ENCODE measurements at regions of chr7 and their contacts with region 1.

Region 1: DNA sequence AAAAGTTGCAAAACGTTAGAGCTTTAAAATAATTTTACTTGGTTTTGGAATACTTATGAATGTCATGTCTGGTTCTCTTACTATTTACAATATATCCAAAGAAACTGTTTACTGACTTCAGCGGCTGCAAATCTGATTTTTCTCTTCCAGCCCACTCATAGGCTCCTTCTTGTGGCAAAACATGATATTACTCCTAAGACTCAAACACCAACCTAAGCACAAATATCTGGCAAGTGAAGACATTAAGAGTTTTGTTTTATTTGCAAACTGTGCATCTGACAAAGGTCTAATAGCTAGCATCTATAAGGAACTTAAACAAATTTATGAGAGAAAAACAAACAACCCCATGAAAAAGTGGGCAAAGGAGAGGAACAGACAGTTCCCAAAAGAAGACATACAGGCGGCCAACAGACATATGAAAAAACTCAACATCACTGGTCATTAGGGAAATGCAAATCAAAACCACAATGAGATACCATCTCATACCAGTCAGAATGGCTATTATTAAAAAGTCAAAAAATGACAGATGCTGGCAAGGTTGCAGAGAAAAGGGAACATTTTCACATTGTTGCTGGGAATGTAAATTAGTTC is 20.3 kb upstream of the GJC3 start:
- DNase-seq: no peak
- ATAC-seq: no peak
- H3K4me3 Mint-ChIP-seq: no peak overlapping the region
- H3K27ac Mint-ChIP-seq: no peak overlapping the region
- H3K4me1 Mint-ChIP-seq: peaks cover 2% of the 10 kb centered on the region
- H3K27me3 Mint-ChIP-seq: peaks cover 24% of the 10 kb centered on the region
- CTCF ChIP-seq: no peak

Region 2: DNA sequence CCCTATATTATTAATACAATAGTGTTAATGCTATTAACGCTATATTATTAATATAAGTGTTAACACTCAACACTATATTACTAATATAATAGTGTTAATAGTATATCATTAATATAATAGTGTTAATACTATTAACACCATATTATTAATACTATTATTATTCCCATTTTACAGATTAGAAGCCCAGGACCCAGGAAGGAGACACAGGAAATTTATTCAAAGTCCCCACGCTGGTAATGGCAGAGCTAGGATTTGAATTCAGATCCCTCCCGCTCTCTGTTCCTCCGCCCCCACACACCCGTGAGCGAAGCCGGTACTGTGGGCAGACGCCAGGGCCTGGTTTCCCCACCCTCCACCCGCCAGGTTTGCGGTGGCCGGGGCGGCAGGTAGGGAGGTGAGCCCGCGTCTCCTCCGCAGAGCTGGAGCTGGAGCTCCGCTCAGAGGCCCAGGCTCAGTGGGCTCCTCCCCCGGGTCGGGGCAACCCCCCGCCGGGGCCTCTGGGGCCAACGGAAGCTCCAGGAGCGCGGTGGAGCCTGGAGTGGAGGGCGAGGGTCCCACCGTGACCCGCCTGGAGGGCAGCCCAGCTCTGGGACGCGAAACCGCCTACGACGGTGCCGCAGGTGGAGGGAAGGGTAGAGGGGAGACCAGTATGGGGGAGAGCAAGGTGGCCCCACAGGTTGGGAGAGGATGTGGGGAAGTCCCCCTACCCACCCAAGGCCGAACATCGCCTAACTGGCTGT is 351.8 kb before region 1 on chr7 and contains the start of gene TMEM225B:
- CTCF ChIA-PET with region 1: no interaction called
- POLR2A ChIA-PET with region 1: no interaction called
- intact Hi-C with region 1: no loop called
- DNase-seq: no peak
- ATAC-seq: no peak
- H3K4me3 Mint-ChIP-seq: no peak within 1 kb of the TSS
- H3K27ac Mint-ChIP-seq: no peak within 1 kb of the TSS
- H3K4me1 Mint-ChIP-seq: no peaks in the 10 kb centered on the region
- H3K27me3 Mint-ChIP-seq: no peaks in the 10 kb centered on the region
- CTCF ChIP-seq: no peak
- total RNA-seq, gene TMEM225B: 0.53 and 1.5 TPM in 2 replicates

Region 3: DNA sequence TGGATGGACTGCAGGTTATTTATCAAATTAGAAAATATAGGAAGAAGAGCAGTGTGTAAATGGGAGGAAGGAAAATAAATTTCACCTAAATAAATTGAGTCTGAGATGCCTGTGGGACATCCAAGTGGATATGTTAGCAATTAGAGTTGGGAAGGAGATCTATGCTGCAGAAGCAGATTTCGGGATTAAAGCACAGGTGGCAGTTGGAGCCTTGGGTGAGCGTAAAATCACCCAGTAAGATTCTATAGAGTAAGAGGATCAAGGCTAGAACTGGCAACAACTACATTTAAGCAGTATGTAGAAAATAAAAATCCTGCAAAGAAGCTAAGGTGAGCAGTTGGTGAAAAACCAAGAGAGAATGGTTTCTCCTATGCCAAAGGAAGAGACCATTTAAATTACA is 38.8 kb before region 1 on chr7:
- CTCF ChIA-PET with region 1: interaction called, 4 read pairs
- POLR2A ChIA-PET with region 1: no interaction called
- intact Hi-C with region 1: loop called (anchors 1 kb)
- DNase-seq: no peak
- ATAC-seq: no peak
- H3K4me3 Mint-ChIP-seq: no peak overlapping the region
- H3K27ac Mint-ChIP-seq: no peak overlapping the region
- H3K4me1 Mint-ChIP-seq: peaks cover 28% of the 10 kb centered on the region
- H3K27me3 Mint-ChIP-seq: no peaks in the 10 kb centered on the region
- CTCF ChIP-seq: no peak